ENCODE measurements at regions of chr2 and their contacts with region 1.

Region 1: DNA sequence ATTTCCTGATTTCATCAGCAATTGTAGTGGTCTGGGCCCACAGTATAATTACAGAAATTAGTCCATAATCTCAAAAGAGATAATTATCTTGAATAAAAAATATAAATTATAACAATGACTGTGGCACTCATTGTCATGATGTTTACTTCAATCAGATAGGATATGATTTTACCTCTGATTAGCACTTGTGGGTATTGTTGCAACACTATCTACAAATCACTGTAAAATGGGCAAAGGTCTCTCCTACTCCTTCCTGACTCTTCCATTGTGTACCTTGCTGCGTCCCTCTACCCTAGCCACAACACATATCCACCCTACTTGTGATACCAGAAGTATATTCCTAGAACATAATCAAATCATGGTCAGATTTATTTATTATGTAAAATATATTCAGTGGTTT is 200.9 kb upstream of the TRIB2 start:
- DNase-seq: no peak
- ATAC-seq: no peak
- H3K4me3 Mint-ChIP-seq: no peak overlapping the region
- H3K27ac Mint-ChIP-seq: no peak overlapping the region
- H3K4me1 Mint-ChIP-seq: peaks cover 7% of the 10 kb centered on the region
- H3K27me3 Mint-ChIP-seq: peaks cover 4% of the 10 kb centered on the region
- CTCF ChIP-seq: no peak

Region 2: GRCh38 chr2:12361506-12361905 is 154.4 kb before region 1 on chr2:
- CTCF ChIA-PET with region 1: no interaction called
- POLR2A ChIA-PET with region 1: no interaction called
- intact Hi-C with region 1: no loop called
- DNase-seq: no peak
- ATAC-seq: no peak
- H3K4me3 Mint-ChIP-seq: no peak overlapping the region
- H3K27ac Mint-ChIP-seq: no peak overlapping the region
- H3K4me1 Mint-ChIP-seq: no peaks in the 10 kb centered on the region
- H3K27me3 Mint-ChIP-seq: no peaks in the 10 kb centered on the region
- CTCF ChIP-seq: no peak

Region 3: GRCh38 chr2:12534646-12535263 is 18.9 kb after region 1 on chr2:
- CTCF ChIA-PET with region 1: no interaction called
- POLR2A ChIA-PET with region 1: no interaction called
- intact Hi-C with region 1: loop called (anchors 1 kb)
- DNase-seq: no peak
- ATAC-seq: no peak
- H3K4me3 Mint-ChIP-seq: no peak overlapping the region
- H3K27ac Mint-ChIP-seq: no peak overlapping the region
- H3K4me1 Mint-ChIP-seq: peaks cover 2% of the 10 kb centered on the region
- H3K27me3 Mint-ChIP-seq: peaks cover 5% of the 10 kb centered on the region
- CTCF ChIP-seq: no peak

Region 4: GRCh38 chr2:12807907-12808810 is 292.3 kb after region 1 on chr2:
- CTCF ChIA-PET with region 1: no interaction called
- POLR2A ChIA-PET with region 1: no interaction called
- intact Hi-C with region 1: no loop called
- DNase-seq: no peak
- ATAC-seq: no peak
- H3K4me3 Mint-ChIP-seq: no peak overlapping the region
- H3K27ac Mint-ChIP-seq: no peak overlapping the region
- H3K4me1 Mint-ChIP-seq: no peaks in the 10 kb centered on the region
- H3K27me3 Mint-ChIP-seq: peaks cover 25% of the 10 kb centered on the region
- CTCF ChIP-seq: no peak

Measured in activated B cell treated with CpG ODN at 0.5 μM for 24 hours (primary cell).